ENCODE measurements at regions of chr1 and their contacts with region 1.

Region 1: GRCh38 chr1:56535939-56536338 is 43.4 kb downstream of the PLPP3 start:
- DNase-seq: peak in 4 of 5 donors; percentile 55 to 71 (median 64)
- ATAC-seq: peak; percentile 81 to 87 (median 84)
- H3K4me3 ChIP-seq: no peak overlapping the region
- H3K27ac ChIP-seq: peak overlapping the region in 11 of 12 donors; percentile 32 to 77 (median 62)
- H3K4me1 ChIP-seq: peaks cover 14 to 99% (median 91%) of the 10 kb centered on the region in 12 donors
- H3K27me3 ChIP-seq: no peaks in the 10 kb centered on the region
- CTCF ChIP-seq: no peak
- POLR2A ChIP-seq: no peak

Region 2: DNA sequence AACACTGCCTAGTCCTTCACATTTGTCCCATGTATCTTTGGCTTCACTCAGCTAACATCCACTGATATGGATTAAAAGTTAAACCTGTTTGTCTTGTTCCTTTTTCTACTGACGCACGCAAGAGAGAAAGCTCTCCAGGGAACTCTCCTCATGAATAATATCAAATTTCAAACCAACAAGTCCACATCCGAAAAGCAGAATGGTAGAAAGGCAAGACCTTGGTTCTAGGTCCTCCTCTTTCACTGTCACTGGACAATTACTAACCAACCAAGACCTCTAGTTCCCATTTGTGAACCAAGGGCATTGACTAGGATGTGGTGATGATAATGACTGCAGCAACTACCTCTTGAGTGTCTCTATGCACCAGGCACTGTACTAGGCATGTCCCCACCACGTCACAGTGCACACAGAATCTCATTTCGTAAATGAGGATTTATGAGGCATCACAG is 35.0 kb after region 1 on chr1:
- intact Hi-C with region 1: loop called in 3 of 10 experiments (anchors 5 kb)
- DNase-seq: no peak
- ATAC-seq: peak; percentile 52 to 76 (median 58)
- H3K4me3 ChIP-seq: no peak overlapping the region
- H3K27ac ChIP-seq: peak overlapping the region in 8 of 12 donors; percentile 10 to 56 (median 24)
- H3K4me1 ChIP-seq: peaks cover 11 to 95% (median 69%) of the 10 kb centered on the region in 12 donors
- H3K27me3 ChIP-seq: no peaks in the 10 kb centered on the region
- CTCF ChIP-seq: no peak
- POLR2A ChIP-seq: peak in 1 of 2 donors; percentile 12

Measured in heart left ventricle (tissue), 16 donors.